ENCODE measurements at regions of chr17 and their contacts with region 1.

Region 1: DNA sequence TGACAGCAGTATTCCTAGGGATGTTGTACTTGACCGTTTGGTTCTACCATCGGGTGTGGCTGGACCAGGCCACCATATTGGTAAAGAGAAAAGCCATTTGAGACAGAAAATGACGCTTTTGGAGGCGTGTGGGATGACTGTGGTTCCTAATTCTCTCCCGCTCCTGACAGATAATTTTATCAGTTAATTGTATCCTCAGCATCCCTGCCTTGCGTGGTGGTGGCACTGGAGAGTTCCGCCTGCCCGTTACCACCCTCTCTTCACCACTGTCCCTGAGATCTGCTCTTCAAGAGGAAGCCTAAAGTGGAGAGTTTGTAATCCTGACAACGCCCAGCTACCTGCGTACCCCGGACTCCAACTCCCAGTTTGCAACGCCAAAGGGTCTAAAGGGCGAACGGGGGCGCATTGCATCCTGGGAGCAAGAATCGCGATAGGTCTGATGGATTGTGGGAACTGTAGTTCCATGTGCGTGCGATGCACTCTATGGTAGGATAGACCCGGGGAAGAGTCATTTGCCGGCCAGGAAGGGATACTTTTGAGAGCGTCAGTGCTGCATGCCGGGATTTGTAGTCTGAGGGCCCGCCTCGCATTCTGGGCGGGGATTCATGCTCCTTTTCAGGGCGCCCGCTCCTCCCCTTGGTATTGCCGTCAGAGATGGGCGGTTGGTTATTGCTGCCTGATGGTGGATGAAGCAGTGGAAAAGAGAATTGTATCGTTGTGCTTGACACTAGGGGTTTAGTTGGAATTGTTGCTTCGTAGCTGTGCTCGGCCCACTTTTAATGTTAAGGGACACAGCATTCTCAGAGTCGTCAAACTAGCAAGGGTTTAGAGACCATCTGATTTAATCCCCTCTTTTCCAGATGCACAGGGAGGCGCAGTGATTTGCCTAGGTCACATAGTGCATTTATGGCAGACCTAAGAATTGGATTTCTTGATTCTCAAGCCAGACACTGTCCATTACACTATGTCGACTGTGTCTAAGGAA is 965 bp upstream of the PHF12 start:
- DNase-seq: peak; percentile 97
- H3K4me3 Mint-ChIP-seq: no peak overlapping the region
- H3K27ac Mint-ChIP-seq: no peak overlapping the region
- H3K4me1 Mint-ChIP-seq: peaks cover 14% of the 10 kb centered on the region
- H3K27me3 Mint-ChIP-seq: no peaks in the 10 kb centered on the region

Region 2: DNA sequence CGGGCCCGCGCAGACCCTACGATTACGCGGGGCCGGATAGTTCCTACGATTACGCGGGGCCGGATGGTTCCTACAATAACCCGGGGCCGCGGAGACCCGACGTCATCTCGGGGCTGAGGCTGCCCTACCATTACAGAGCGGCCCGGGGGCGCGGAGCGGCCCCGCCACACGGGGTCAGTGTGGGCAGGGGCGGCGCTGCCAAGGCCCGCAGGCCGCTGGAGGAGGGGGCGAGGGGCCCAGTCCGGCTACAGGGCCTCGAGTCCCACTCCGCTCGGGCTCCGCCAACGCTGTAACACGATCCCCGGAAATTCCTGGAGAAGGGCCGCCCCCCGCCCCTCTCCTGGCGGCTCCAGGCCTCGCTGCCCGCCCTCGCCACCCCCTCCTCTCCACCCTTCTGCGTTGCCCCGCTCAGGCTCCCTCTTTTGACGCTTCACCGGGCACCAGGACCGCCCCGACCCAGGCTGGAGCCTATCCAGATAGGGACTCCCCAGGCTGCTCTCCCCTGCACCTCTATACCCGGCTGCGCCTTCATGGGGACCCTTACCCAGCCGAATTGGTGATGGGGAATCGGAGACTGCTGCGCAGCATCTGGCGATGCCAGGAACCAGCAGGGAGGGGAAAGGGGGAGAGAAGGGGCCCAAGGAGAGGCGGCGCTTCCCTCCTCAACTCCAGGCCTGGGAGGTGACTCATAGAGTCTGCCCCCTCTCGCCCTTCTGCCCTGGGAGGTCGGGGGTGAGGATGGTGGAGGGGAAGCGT is 234.5 kb before region 1 on chr17 and contains the start of gene RAB34:
- CTCF ChIA-PET with region 1: interaction called, 16 read pairs
- POLR2A ChIA-PET with region 1: interaction called, 61 read pairs
- DNase-seq: peak; percentile 23
- H3K4me3 Mint-ChIP-seq: peak within 1 kb of the TSS; percentile 44
- H3K27ac Mint-ChIP-seq: peak within 1 kb of the TSS; percentile 64
- H3K4me1 Mint-ChIP-seq: peaks cover 40% of the 10 kb centered on the region
- H3K27me3 Mint-ChIP-seq: peaks cover 25% of the 10 kb centered on the region
- total RNA-seq, gene RAB34: 6.5 to 7.4 TPM

Region 3: DNA sequence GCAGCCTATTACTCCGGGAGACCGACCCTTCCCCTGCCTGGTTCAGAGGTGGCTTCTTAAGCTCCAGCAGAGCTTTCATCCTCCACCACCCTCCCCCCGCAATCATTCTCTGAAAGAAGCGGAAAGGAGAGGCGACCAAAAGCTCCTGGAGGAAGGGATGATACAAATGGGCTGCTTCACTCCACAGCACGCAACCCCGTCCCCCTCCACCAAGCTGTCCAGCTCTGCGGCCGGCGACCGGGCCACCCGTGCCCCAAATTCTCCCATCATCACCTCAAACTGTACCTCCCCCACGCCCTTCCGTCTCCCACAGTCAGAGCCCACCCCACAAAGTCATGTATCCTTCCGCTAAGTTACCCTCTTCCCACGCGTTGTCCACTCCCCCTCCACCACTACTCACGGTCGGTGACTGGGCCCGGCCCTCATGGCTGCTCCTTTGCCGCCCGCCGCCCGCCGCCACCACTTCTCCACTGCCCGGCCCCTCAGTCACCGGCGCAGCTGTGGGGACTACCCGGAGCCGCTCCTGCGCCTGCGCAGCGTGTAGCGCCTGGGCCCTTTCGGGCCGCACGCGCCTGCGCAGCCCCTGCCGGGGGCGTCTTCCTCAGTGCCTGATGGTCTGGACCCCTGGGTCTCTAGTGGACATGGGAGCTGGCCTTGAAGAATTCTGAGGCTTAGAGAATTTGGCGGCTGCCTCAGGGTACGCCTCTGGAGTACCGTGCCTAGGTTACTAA is 109.8 kb before region 1 on chr17 and contains the start of gene FAM222B:
- CTCF ChIA-PET with region 1: interaction called, 10 read pairs
- POLR2A ChIA-PET with region 1: interaction called, 13 read pairs
- DNase-seq: peak; percentile 88
- H3K4me3 Mint-ChIP-seq: peak within 1 kb of the TSS; percentile 100
- H3K27ac Mint-ChIP-seq: peak within 1 kb of the TSS; percentile 88
- H3K4me1 Mint-ChIP-seq: peaks cover 26% of the 10 kb centered on the region
- H3K27me3 Mint-ChIP-seq: no peaks in the 10 kb centered on the region
- total RNA-seq, gene FAM222B: 15.5 to 17.1 TPM

Region 4: GRCh38 chr17:28902819-28903545 is 49.3 kb before region 1 on chr17 and contains the start of gene DHRS13:
- CTCF ChIA-PET with region 1: interaction called, 37 read pairs
- POLR2A ChIA-PET with region 1: interaction called, 21 read pairs
- DNase-seq: peak; percentile 94
- H3K4me3 Mint-ChIP-seq: peak within 1 kb of the TSS; percentile 79
- H3K27ac Mint-ChIP-seq: peak within 1 kb of the TSS; percentile 78
- H3K4me1 Mint-ChIP-seq: peaks cover 48% of the 10 kb centered on the region
- H3K27me3 Mint-ChIP-seq: no peaks in the 10 kb centered on the region
- total RNA-seq, gene DHRS13: 25.2 to 25.7 TPM

Region 5: GRCh38 chr17:28937044-28937729 is 15.1 kb before region 1 on chr17:
- CTCF ChIA-PET with region 1: interaction called, 6 read pairs
- POLR2A ChIA-PET with region 1: interaction called, 17 read pairs
- DNase-seq: no peak
- H3K4me3 Mint-ChIP-seq: no peak overlapping the region
- H3K27ac Mint-ChIP-seq: no peak overlapping the region
- H3K4me1 Mint-ChIP-seq: peaks cover 63% of the 10 kb centered on the region
- H3K27me3 Mint-ChIP-seq: no peaks in the 10 kb centered on the region

Region 6: DNA sequence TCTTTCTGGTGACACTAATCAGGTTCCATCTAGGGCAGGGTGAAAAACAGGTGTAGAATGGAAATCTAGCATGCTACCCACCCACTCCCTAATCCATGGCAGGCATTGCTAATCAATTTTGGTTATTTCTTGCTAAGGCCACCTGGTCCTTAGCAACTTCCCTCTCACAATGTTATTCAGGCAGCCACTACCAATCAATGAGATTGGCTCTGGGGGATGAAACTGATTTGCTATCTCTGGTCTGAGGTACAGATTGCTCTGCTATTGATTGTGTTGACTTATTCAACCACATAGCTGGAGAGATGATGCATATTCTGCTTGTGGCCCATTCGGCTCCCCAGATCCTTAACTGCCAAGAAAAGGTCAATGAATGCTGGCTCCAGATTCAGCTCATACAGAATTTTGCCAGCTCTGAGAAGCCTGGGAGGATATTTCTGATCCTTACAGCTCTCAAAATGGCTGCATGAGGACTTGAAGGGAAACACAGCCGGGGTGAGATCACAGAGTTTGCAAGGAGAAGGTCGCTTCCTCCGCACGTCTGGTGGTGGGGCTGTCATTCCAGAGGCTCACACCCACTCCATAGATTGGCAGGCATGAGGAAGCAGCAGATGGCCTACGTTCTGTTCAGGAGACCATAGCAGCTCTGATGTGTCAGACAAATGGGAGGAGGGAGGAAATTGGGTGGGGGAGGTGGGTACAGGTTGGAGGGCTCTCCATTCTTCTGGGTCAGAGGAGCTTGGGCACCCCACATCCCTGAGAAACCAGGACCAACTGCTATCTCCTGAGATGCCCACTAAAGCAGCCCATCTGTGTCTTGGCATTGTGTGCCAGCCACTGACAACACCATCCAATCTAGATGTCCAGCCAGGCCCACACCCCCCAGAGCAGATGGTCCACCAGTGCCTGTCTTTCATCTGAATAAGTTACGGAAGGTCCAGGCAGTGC is 31.3 kb after region 1 on chr17:
- CTCF ChIA-PET with region 1: no interaction called
- POLR2A ChIA-PET with region 1: no interaction called
- DNase-seq: no peak
- H3K4me3 Mint-ChIP-seq: no peak overlapping the region
- H3K27ac Mint-ChIP-seq: peak overlapping the region; percentile 88
- H3K4me1 Mint-ChIP-seq: peaks cover 24% of the 10 kb centered on the region
- H3K27me3 Mint-ChIP-seq: peaks cover 3% of the 10 kb centered on the region

Region 7: GRCh38 chr17:29124117-29124924 is 172.0 kb after region 1 on chr17:
- CTCF ChIA-PET with region 1: interaction called, 14 read pairs
- POLR2A ChIA-PET with region 1: interaction called, 4 read pairs
- DNase-seq: peak; percentile 53
- H3K4me3 Mint-ChIP-seq: no peak overlapping the region
- H3K27ac Mint-ChIP-seq: no peak overlapping the region
- H3K4me1 Mint-ChIP-seq: peaks cover 8% of the 10 kb centered on the region
- H3K27me3 Mint-ChIP-seq: no peaks in the 10 kb centered on the region

Measured in activated CD4-positive, alpha-beta memory T cell treated with anti-CD3 and anti-CD28 coated beads, Interleukin-2, amount 10 ng/mL, durations not matched to agents 7 days and 5 days (primary cell).